HEK293 (cell line): ENCODE measurements at regions of chr6 and their contacts with region 1.

Region 1: DNA sequence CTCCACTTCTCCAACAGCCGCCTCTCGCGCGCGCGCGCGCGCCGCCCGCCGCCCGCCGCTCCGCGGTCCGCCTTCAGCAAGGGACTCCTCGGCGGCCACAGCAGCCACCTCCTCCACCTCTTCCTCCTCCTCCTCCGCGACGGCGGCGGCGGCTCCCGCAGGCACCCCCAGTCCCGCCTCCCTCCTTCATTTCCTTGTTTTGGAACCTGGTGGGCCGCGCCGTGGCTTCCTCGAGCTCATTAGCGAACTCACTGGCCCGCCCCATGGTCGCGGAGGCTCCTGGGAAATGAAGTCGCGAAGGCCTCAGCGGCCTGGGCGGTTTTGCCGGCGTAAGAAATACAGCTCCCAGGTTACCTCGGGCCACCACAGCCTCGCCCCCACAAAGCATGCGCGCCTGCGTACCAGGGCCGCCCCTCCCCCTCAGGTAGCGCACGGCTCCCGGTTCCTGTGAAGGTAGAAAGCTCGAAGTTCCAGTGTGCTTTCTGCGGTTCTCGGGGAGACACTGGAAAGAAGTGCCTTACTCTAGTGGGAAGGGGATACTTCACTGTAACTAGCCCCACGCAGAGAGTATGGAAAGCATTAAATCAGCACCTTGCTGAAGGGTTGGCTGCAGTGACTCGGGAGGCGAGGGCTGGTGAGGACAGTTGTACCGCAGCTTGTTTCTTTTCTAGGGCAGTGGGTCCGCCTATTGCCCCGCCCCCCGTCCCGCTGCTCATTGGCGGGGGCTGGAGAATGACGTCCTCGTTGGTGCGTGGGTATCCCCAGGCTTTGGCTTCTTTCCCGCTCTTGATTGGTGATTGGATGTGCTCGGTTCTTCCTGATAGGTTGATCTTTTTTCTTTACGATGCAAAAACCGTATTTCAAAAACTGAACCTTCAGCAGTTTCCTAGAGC is at the start of gene CDK19:
- H3K4me3 ChIP-seq: peak within 1 kb of the TSS; percentile 95
- H3K27ac ChIP-seq: peak within 1 kb of the TSS; percentile 79
- H3K4me1 ChIP-seq: peaks cover 10% of the 10 kb centered on the region; the same call in 1 of the 2 replicates
- CTCF ChIP-seq: no peak

Region 2: GRCh38 chr6:110828396-110828795 is 12.9 kb after region 1 on chr6:
- CTCF ChIA-PET with region 1: interaction called, 3 read pairs
- POLR2A ChIA-PET with region 1: interaction called, 10 read pairs
- H3K4me3 ChIP-seq: no peak overlapping the region
- H3K27ac ChIP-seq: no peak overlapping the region
- H3K4me1 ChIP-seq: no peaks in the 10 kb centered on the region
- CTCF ChIP-seq: no peak